PC-9 (cell line): ENCODE measurements at regions of chr14 and their contacts with region 1.

Region 1: DNA sequence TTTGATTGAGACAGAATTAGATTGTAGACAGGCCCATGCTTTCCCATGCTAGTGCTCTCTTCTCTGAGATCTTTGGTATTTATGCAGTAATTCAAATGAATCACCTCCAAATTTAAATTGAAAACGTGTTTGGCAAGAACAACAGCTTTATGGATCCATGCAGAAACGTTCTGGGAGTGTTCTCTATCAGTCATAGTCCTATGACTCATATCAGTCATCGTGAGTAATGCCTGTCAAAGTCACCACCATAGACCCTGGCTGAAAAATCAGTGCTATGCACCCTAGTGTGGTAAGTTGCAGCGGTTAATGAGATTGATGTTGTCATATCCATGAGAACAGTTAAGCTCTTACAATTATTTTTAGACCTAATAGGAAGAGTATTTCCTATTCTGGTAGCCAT is 90.1 kb upstream of the FOXG1 start:
- DNase-seq: peak in 1 of 2 experiments; percentile 80
- H3K4me3 ChIP-seq: no peak overlapping the region
- H3K27ac ChIP-seq: 0 out of 2 replicates have a peak overlapping the region, but pooled peaks have one; percentile 19
- H3K4me1 ChIP-seq: peaks cover 19% of the 10 kb centered on the region
- H3K27me3 ChIP-seq: no peaks in the 10 kb centered on the region
- CTCF ChIP-seq: no peak

Region 2: DNA sequence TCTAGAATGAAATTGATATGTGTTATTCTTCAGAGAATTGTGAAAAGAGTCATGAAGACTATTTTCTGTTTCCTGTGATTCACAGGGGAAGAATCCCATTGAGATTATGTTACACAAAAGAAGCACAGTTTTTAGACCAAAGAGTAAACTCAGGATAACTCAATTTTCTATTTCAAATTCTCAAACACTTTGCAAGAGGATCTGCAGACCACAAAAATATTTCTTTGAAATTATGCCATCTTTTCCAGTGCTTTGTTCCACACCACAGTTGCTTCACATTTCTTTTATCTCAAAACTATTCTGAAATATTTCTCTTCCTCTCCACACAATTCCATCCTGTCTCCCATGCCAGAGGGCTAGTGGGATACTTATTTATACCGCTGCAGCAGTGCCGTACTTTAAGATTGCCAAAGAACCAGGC is 98.8 kb before region 1 on chr14:
- CTCF ChIA-PET with region 1: no interaction called
- POLR2A ChIA-PET with region 1: no interaction called
- intact Hi-C with region 1: no loop called
- DNase-seq: peak in 1 of 2 experiments; percentile 5
- H3K4me3 ChIP-seq: no peak overlapping the region
- H3K27ac ChIP-seq: no peak overlapping the region
- H3K4me1 ChIP-seq: no peaks in the 10 kb centered on the region
- H3K27me3 ChIP-seq: no peaks in the 10 kb centered on the region
- CTCF ChIP-seq: no peak

Region 3: DNA sequence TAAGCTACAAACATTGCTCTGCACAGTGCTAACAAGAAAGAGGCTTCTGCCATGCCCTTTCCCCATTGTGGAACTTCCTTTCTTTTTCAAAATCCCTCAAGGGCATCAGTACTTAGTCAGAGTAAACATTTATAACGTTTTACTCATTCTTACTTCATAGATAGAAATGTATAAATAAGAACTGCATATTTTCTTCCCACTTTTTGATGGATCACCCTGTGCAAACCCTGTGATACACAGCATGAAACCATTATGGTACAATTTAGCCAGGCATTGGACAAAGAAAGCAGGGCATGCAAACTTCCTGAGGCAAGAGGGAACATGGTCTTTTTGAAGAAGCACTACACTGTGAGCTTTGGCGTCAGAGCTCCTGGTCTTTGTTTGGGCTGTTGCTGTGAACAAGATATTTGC is 23.7 kb before region 1 on chr14:
- CTCF ChIA-PET with region 1: no interaction called
- POLR2A ChIA-PET with region 1: no interaction called
- intact Hi-C with region 1: loop called (anchors 2 kb)
- DNase-seq: peak; percentile 15 to 72
- H3K4me3 ChIP-seq: no peak overlapping the region
- H3K27ac ChIP-seq: peak overlapping the region; percentile 61
- H3K4me1 ChIP-seq: peaks cover 14% of the 10 kb centered on the region
- H3K27me3 ChIP-seq: no peaks in the 10 kb centered on the region
- CTCF ChIP-seq: no peak

Region 4: GRCh38 chr14:28661171-28661772 is 15.2 kb before region 1 on chr14:
- CTCF ChIA-PET with region 1: no interaction called
- POLR2A ChIA-PET with region 1: no interaction called
- intact Hi-C with region 1: loop called (anchors 2 kb)
- DNase-seq: peak; percentile 25 to 38
- H3K4me3 ChIP-seq: no peak overlapping the region
- H3K27ac ChIP-seq: no peak overlapping the region
- H3K4me1 ChIP-seq: peaks cover 13% of the 10 kb centered on the region
- H3K27me3 ChIP-seq: no peaks in the 10 kb centered on the region
- CTCF ChIP-seq: no peak

Region 5: GRCh38 chr14:29536886-29537511 is 860.5 kb after region 1 on chr14:
- CTCF ChIA-PET with region 1: no interaction called
- POLR2A ChIA-PET with region 1: no interaction called
- intact Hi-C with region 1: no loop called
- DNase-seq: no peak
- H3K4me3 ChIP-seq: no peak overlapping the region
- H3K27ac ChIP-seq: no peak overlapping the region
- H3K4me1 ChIP-seq: no peaks in the 10 kb centered on the region
- H3K27me3 ChIP-seq: no peaks in the 10 kb centered on the region
- CTCF ChIP-seq: peak; percentile 63